CD4-positive, alpha-beta T cell (primary cell): ENCODE measurements at regions of chr10 and their contacts with region 1.

Region 1: GRCh38 chr10:62637249-62638061 is 167.1 kb upstream of the ADO start:
- DNase-seq: peak; percentile 44 to 87 (median 52)
- ATAC-seq: peak; percentile 91
- H3K4me3 ChIP-seq: peak overlapping the region; percentile 49
- H3K4me3 Mint-ChIP-seq: no peak overlapping the region
- H3K27ac ChIP-seq: peak overlapping the region; percentile 70 to 78
- H3K27ac Mint-ChIP-seq: no peak overlapping the region
- H3K4me1 ChIP-seq: peaks cover 32% of the 10 kb centered on the region
- H3K4me1 Mint-ChIP-seq: peaks cover 4% of the 10 kb centered on the region
- H3K27me3 ChIP-seq: no peaks in the 10 kb centered on the region
- H3K27me3 Mint-ChIP-seq: no peaks in the 10 kb centered on the region
- CTCF ChIP-seq: no peak

Region 2: DNA sequence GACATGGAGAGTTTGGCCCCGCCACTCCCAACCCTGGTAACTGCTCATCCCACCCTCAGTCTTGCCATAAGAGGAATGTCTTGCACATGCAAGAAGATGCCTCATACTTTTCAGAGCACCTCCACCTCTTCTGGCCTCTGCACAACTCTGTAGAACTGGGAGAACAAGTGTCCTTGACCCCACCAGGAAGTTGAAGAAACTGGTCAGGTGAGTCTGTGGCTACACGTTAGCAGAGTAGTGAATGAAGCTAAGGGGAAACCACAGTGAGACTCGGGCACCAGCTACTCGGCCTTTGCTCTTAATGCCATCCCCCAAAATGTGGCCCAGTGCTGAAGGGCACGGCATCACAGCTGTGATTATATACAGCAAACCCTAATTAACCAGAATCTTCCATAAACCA is 625.9 kb before region 1 on chr10:
- CTCF ChIA-PET with region 1: no interaction called
- POLR2A ChIA-PET with region 1: no interaction called
- intact Hi-C with region 1: no loop called
- DNase-seq: no peak
- ATAC-seq: no peak
- H3K4me3 ChIP-seq: no peak overlapping the region
- H3K4me3 Mint-ChIP-seq: no peak overlapping the region
- H3K27ac ChIP-seq: no peak overlapping the region
- H3K27ac Mint-ChIP-seq: no peak overlapping the region
- H3K4me1 ChIP-seq: peaks cover 4% of the 10 kb centered on the region
- H3K4me1 Mint-ChIP-seq: peaks cover 37% of the 10 kb centered on the region
- H3K27me3 ChIP-seq: no peaks in the 10 kb centered on the region
- H3K27me3 Mint-ChIP-seq: no peaks in the 10 kb centered on the region
- CTCF ChIP-seq: no peak

Region 3: GRCh38 chr10:62399211-62399610 is 238.2 kb before region 1 on chr10:
- CTCF ChIA-PET with region 1: no interaction called
- POLR2A ChIA-PET with region 1: no interaction called
- intact Hi-C with region 1: no loop called
- DNase-seq: no peak
- ATAC-seq: no peak
- H3K4me3 ChIP-seq: no peak overlapping the region
- H3K4me3 Mint-ChIP-seq: no peak overlapping the region
- H3K27ac ChIP-seq: no peak overlapping the region
- H3K27ac Mint-ChIP-seq: no peak overlapping the region
- H3K4me1 ChIP-seq: no peaks in the 10 kb centered on the region
- H3K4me1 Mint-ChIP-seq: no peaks in the 10 kb centered on the region
- H3K27me3 ChIP-seq: no peaks in the 10 kb centered on the region
- H3K27me3 Mint-ChIP-seq: peaks cover 10% of the 10 kb centered on the region
- CTCF ChIP-seq: no peak

Region 4: GRCh38 chr10:62647375-62648092 is 10.1 kb after region 1 on chr10:
- CTCF ChIA-PET with region 1: interaction called, 3 read pairs
- POLR2A ChIA-PET with region 1: interaction called, 10 read pairs
- intact Hi-C with region 1: no loop called
- DNase-seq: no peak
- ATAC-seq: no peak
- H3K4me3 ChIP-seq: no peak overlapping the region
- H3K4me3 Mint-ChIP-seq: no peak overlapping the region
- H3K27ac ChIP-seq: no peak overlapping the region
- H3K27ac Mint-ChIP-seq: no peak overlapping the region
- H3K4me1 ChIP-seq: no peaks in the 10 kb centered on the region
- H3K4me1 Mint-ChIP-seq: no peaks in the 10 kb centered on the region
- H3K27me3 ChIP-seq: no peaks in the 10 kb centered on the region
- H3K27me3 Mint-ChIP-seq: no peaks in the 10 kb centered on the region
- CTCF ChIP-seq: no peak

Region 5: DNA sequence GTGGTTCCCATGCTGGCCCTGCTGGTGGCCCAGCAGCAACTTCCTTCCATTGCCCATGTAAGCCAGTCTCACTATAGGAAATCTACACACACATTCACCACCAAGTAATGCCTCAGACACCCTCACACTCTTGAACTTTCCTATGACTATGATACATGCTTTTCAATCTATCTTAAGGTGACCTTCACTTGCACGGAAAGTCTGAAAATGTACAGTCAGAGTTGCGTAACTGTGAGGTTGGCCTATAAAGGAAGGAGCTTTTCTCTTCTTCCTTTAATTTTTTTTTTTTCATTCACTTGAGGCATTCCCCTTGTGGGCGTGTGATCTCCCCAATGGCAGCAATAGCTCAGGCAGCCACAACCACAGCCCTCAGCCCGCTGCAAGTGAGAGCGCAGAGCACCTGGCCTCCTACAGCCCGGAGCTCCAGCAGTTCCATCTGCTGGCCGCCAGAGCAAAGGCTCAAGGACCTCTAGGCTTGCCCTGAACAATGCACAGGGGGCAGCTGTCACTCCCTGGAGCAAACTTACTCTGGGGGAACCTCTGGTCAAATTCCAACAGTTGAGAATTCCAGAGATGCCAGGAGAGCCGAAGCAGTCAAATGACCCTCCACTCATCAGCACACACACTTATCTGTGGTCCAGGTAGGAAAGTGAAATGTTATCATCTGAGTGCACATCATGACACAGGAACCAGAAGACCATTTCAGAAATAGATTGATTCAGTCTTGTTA is 43.9 kb after region 1 on chr10:
- CTCF ChIA-PET with region 1: interaction called, 6 read pairs
- POLR2A ChIA-PET with region 1: interaction called, 12 read pairs
- intact Hi-C with region 1: loop called in 1 of 2 experiments (anchors 5 kb)
- DNase-seq: peak; percentile 25 to 93 (median 45)
- ATAC-seq: peak; percentile 95
- H3K4me3 ChIP-seq: no peak overlapping the region
- H3K4me3 Mint-ChIP-seq: no peak overlapping the region
- H3K27ac ChIP-seq: no peak overlapping the region
- H3K27ac Mint-ChIP-seq: peak overlapping the region; percentile 2
- H3K4me1 ChIP-seq: peaks cover 15% of the 10 kb centered on the region
- H3K4me1 Mint-ChIP-seq: peaks cover 12% of the 10 kb centered on the region
- H3K27me3 ChIP-seq: no peaks in the 10 kb centered on the region
- H3K27me3 Mint-ChIP-seq: no peaks in the 10 kb centered on the region
- CTCF ChIP-seq: no peak

Region 6: GRCh38 chr10:62732841-62733653 is 95.6 kb after region 1 on chr10:
- CTCF ChIA-PET with region 1: interaction called, 18 read pairs
- POLR2A ChIA-PET with region 1: interaction called, 27 read pairs
- intact Hi-C with region 1: loop called in 1 of 2 experiments (anchors 1 kb)
- DNase-seq: peak in 13 of 14 experiments; percentile 12 to 90 (median 39)
- ATAC-seq: peak; percentile 87
- H3K4me3 ChIP-seq: no peak overlapping the region
- H3K4me3 Mint-ChIP-seq: peak overlapping the region; percentile 56
- H3K27ac ChIP-seq: peak overlapping the region; percentile 33 to 66
- H3K27ac Mint-ChIP-seq: no peak overlapping the region
- H3K4me1 ChIP-seq: peaks cover 49% of the 10 kb centered on the region
- H3K4me1 Mint-ChIP-seq: peaks cover 6% of the 10 kb centered on the region
- H3K27me3 ChIP-seq: no peaks in the 10 kb centered on the region
- H3K27me3 Mint-ChIP-seq: no peaks in the 10 kb centered on the region
- CTCF ChIP-seq: no peak

Region 7: GRCh38 chr10:62779487-62780248 is 142.2 kb after region 1 on chr10:
- CTCF ChIA-PET with region 1: interaction called, 5 read pairs
- POLR2A ChIA-PET with region 1: interaction called, 12 read pairs
- intact Hi-C with region 1: no loop called
- DNase-seq: peak; percentile 59 to 95 (median 71)
- ATAC-seq: peak; percentile 99
- H3K4me3 ChIP-seq: no peak overlapping the region
- H3K4me3 Mint-ChIP-seq: no peak overlapping the region
- H3K27ac ChIP-seq: no peak overlapping the region
- H3K27ac Mint-ChIP-seq: peak overlapping the region; percentile 34
- H3K4me1 ChIP-seq: peaks cover 16% of the 10 kb centered on the region
- H3K4me1 Mint-ChIP-seq: peaks cover 15% of the 10 kb centered on the region
- H3K27me3 ChIP-seq: no peaks in the 10 kb centered on the region
- H3K27me3 Mint-ChIP-seq: no peaks in the 10 kb centered on the region
- CTCF ChIP-seq: no peak

Region 8: DNA sequence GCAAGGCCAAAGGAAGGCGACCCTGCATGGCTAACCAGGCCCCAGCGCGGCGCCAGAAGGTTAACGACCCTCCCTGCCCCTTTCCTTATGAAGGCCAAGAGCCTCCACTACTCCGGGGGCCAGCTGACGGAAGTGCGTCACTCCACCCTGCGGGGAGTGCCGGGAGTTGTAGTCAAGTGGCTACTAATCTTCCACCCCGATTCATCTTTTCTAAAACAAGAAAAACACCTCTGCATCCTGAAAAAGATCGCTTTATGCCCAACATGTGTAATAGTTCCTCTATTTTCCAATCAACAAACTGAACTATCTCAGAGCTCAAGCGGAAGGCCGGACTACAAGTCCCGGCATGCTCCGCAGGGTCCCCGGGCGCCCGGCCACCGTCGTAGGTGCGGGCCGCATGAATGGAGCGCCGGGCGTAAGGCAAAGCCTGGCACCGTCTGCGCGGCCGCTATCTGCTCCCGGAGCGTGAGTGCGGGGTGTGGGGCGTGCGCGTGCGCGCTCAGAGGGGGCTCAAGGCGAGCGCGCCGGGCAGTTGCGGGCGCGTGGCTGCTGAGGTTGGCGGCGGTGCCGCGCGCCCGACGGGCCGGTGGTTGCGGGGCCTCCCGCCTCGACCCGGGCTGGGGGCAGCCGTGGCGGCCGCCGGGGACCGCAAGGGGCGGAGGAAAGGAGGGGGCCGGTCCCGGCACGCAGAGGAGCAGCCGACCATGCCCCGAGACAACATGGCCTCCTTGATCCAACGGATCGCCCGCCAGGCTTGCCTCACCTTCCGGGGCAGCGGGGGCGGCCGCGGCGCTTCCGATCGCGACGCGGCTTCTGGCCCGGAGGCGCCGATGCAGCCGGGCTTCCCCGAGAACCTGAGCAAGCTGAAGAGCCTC is 167.1 kb after region 1 on chr10 and contains the start of gene ADO:
- CTCF ChIA-PET with region 1: interaction called, 5 read pairs
- POLR2A ChIA-PET with region 1: interaction called, 56 read pairs
- intact Hi-C with region 1: no loop called
- DNase-seq: peak; percentile 63 to 90 (median 72)
- ATAC-seq: peak; percentile 89
- H3K4me3 ChIP-seq: peak within 1 kb of the TSS; percentile 64
- H3K4me3 Mint-ChIP-seq: peak within 1 kb of the TSS; percentile 93
- H3K27ac ChIP-seq: peak within 1 kb of the TSS; percentile 76 to 94
- H3K27ac Mint-ChIP-seq: peak within 1 kb of the TSS; percentile 94
- H3K4me1 ChIP-seq: peaks cover 19% of the 10 kb centered on the region
- H3K4me1 Mint-ChIP-seq: peaks cover 44% of the 10 kb centered on the region
- H3K27me3 ChIP-seq: no peaks in the 10 kb centered on the region
- H3K27me3 Mint-ChIP-seq: no peaks in the 10 kb centered on the region
- CTCF ChIP-seq: no peak
- total RNA-seq, gene ADO: 14.3 to 15.9 TPM

Region 9: DNA sequence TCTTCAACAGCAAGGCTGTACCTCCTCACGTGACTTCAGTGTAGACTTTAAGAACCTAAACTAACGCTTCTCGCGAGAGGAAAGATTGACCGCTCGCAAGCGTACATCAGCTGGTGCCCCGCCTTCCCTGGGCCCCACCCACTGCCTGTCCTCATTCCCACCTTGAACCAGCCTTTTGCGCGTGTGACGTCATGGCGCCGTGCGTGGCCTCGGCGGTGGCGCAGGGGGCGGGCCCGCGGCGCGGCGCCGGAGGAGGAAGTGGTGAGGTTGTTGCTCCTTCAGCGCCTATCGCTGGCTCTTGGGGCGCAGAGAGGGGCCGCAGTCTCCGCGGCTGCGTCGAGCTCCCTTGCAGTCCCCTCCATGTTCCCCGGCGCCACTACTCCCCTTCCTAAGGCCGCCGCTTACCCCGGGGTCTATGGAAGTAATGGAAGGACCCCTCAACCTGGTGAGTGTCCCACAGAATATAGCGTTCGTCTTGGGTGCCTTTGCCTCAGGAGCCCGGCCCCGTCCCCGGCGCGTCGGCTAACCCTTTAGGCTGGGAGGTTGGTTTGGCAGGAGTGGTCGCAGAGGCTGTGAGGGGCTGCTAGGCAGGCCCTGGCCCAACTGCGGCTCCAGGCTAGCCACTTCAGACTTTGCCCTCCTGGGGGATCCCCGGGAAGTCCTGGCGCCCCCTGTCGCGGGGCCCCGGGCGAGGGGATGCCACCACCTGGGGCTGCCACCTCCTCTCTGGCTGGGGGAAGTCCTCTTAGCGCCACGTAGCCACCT is 495.8 kb after region 1 on chr10 and contains the start of gene NRBF2:
- CTCF ChIA-PET with region 1: no interaction called
- POLR2A ChIA-PET with region 1: interaction called, 13 read pairs
- intact Hi-C with region 1: loop called (anchors 5 kb)
- DNase-seq: peak; percentile 91 to 99 (median 95)
- ATAC-seq: peak; percentile 90
- H3K4me3 ChIP-seq: peak within 1 kb of the TSS; percentile 89
- H3K4me3 Mint-ChIP-seq: peak within 1 kb of the TSS; percentile 94
- H3K27ac ChIP-seq: peak within 1 kb of the TSS; percentile 97 to 98
- H3K27ac Mint-ChIP-seq: peak within 1 kb of the TSS; percentile 88
- H3K4me1 ChIP-seq: peaks cover 44% of the 10 kb centered on the region
- H3K4me1 Mint-ChIP-seq: peaks cover 45% of the 10 kb centered on the region
- H3K27me3 ChIP-seq: no peaks in the 10 kb centered on the region
- H3K27me3 Mint-ChIP-seq: peaks cover 9% of the 10 kb centered on the region
- CTCF ChIP-seq: peak; percentile 22
- total RNA-seq, gene NRBF2: 25.3 to 25.6 TPM